CD8-positive, alpha-beta T cell (primary cell): ENCODE measurements at regions of chr12 and their contacts with region 1.

Region 1: GRCh38 chr12:56636675-56637540 is 6.8 kb upstream of the BAZ2A start:
- DNase-seq: peak; percentile 91 to 99 (median 97)
- ATAC-seq: peak; percentile 71
- H3K4me3 ChIP-seq: peak overlapping the region; percentile 58 to 79
- H3K4me3 Mint-ChIP-seq: peak overlapping the region; percentile 98
- H3K27ac ChIP-seq: peak overlapping the region; percentile 79 to 87
- H3K27ac Mint-ChIP-seq: peak overlapping the region; percentile 97
- H3K4me1 ChIP-seq: peaks cover 45% of the 10 kb centered on the region
- H3K4me1 Mint-ChIP-seq: peaks cover 57% of the 10 kb centered on the region
- H3K27me3 ChIP-seq: no peaks in the 10 kb centered on the region
- H3K27me3 Mint-ChIP-seq: no peaks in the 10 kb centered on the region
- CTCF ChIP-seq: peak; percentile 71

Region 2: GRCh38 chr12:55829967-55830600 is 806.8 kb before region 1 on chr12:
- CTCF ChIA-PET with region 1: no interaction called
- POLR2A ChIA-PET with region 1: no interaction called
- intact Hi-C with region 1: loop called in 1 of 2 experiments (anchors 10 kb)
- DNase-seq: peak in 7 of 9 experiments; percentile 15 to 63 (median 48)
- ATAC-seq: peak; percentile 16
- H3K4me3 ChIP-seq: peak overlapping the region; percentile 65 to 93
- H3K4me3 Mint-ChIP-seq: peak overlapping the region; percentile 99
- H3K27ac ChIP-seq: peak overlapping the region; percentile 71 to 79
- H3K27ac Mint-ChIP-seq: peak overlapping the region; percentile 95
- H3K4me1 ChIP-seq: peaks cover 45% of the 10 kb centered on the region
- H3K4me1 Mint-ChIP-seq: peaks cover 56% of the 10 kb centered on the region
- H3K27me3 ChIP-seq: no peaks in the 10 kb centered on the region
- H3K27me3 Mint-ChIP-seq: no peaks in the 10 kb centered on the region
- CTCF ChIP-seq: no peak

Region 3: GRCh38 chr12:56315622-56316473 is 321.1 kb before region 1 on chr12 and contains the start of gene CNPY2:
- CTCF ChIA-PET with region 1: no interaction called
- POLR2A ChIA-PET with region 1: no interaction called
- intact Hi-C with region 1: no loop called
- DNase-seq: peak; percentile 89 to 97 (median 95)
- ATAC-seq: peak; percentile 92
- H3K4me3 ChIP-seq: peak within 1 kb of the TSS; percentile 86 to 99
- H3K4me3 Mint-ChIP-seq: peak within 1 kb of the TSS; percentile 99
- H3K27ac ChIP-seq: peak within 1 kb of the TSS; percentile 70 to 98
- H3K27ac Mint-ChIP-seq: peak within 1 kb of the TSS; percentile 98
- H3K4me1 ChIP-seq: peaks cover 10% of the 10 kb centered on the region
- H3K4me1 Mint-ChIP-seq: peaks cover 16% of the 10 kb centered on the region
- H3K27me3 ChIP-seq: no peaks in the 10 kb centered on the region
- H3K27me3 Mint-ChIP-seq: no peaks in the 10 kb centered on the region
- CTCF ChIP-seq: no peak
- total RNA-seq, gene CNPY2: 23.5 to 33.9 TPM

Region 4: DNA sequence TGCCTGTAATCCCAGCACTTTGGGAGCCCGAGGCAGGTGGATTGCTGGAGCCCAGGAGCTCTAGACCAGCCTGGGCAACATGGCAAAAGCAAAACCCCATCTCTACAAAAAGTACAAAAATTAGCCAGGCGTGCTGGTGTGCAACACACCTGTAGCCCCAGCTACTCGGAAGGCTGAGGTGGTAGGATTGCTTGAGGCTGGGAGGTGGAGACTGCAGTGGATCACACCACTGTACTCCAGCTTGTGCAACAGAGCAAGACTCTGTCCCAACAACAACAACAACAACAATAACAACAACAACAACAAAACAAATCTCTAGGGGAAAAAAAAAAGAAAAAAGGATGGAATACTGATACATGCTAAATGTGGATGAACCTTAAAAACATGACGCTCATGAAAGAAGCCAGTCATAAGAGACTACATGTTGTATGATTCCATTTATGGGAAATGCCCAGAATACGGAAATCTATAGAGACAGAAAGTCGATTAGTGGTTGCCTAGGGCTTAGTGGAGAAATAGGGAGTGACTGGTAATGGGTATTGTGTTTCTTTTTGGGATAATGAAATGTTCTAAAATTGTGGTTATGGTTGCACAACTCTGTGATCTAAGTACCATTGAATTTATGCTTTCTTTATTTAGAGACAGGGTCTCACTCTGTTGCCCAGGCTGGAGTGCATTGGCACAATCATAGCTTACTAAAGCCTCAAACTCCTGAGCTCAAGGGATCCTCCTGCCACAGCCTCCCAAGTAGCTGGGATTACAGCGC is 107.4 kb before region 1 on chr12:
- CTCF ChIA-PET with region 1: no interaction called
- POLR2A ChIA-PET with region 1: no interaction called
- intact Hi-C with region 1: no loop called
- DNase-seq: no peak
- ATAC-seq: no peak
- H3K4me3 ChIP-seq: no peak overlapping the region
- H3K4me3 Mint-ChIP-seq: no peak overlapping the region
- H3K27ac ChIP-seq: no peak overlapping the region
- H3K27ac Mint-ChIP-seq: no peak overlapping the region
- H3K4me1 ChIP-seq: no peaks in the 10 kb centered on the region
- H3K4me1 Mint-ChIP-seq: no peaks in the 10 kb centered on the region
- H3K27me3 ChIP-seq: no peaks in the 10 kb centered on the region
- H3K27me3 Mint-ChIP-seq: no peaks in the 10 kb centered on the region
- CTCF ChIP-seq: no peak

Region 5: DNA sequence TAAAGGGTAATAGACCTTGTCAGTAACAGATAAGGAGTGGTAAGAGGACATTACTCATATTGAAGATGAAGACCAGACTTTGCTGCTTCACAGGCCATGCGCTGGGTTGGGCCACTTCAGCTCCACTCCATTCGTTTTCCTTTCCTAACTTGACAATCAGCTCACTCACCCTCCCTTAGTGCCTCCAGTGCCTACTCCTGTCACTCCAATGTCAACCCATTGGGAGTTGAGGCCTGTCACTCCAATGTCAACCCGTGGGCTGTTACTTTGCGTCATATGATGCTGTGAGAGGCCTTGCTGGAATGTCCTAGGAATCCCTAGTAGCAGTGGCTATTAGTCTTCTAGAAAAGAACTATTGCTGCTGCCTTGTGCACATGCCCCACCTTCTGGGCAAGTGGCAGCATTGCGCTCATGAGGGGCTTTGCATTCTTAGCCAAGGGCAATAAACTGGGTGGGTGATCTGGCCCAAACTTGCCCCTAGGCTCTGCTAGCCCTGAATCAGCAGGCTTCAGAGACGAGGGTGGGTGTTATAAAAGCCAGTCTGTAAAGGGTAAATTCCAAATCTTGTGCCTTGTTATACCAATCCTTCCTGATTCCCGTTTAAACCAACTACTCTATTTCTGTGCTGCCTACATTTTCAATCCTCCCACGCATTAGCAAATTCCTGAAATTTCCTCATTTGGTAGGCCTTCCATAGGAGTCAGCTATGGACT is 42.8 kb before region 1 on chr12:
- CTCF ChIA-PET with region 1: interaction called, 5 read pairs
- POLR2A ChIA-PET with region 1: no interaction called
- intact Hi-C with region 1: loop called in 1 of 2 experiments (anchors 2 kb)
- DNase-seq: peak; percentile 34 to 76 (median 65)
- ATAC-seq: peak; percentile 87
- H3K4me3 ChIP-seq: no peak overlapping the region
- H3K4me3 Mint-ChIP-seq: no peak overlapping the region
- H3K27ac ChIP-seq: no peak overlapping the region
- H3K27ac Mint-ChIP-seq: peak overlapping the region; percentile 77
- H3K4me1 ChIP-seq: no peaks in the 10 kb centered on the region
- H3K4me1 Mint-ChIP-seq: no peaks in the 10 kb centered on the region
- H3K27me3 ChIP-seq: no peaks in the 10 kb centered on the region
- H3K27me3 Mint-ChIP-seq: no peaks in the 10 kb centered on the region
- CTCF ChIP-seq: peak; percentile 91

Region 6: GRCh38 chr12:56622535-56622934 is 14.4 kb before region 1 on chr12:
- CTCF ChIA-PET with region 1: interaction called, 17 read pairs
- POLR2A ChIA-PET with region 1: interaction called, 23 read pairs
- intact Hi-C with region 1: loop called in 1 of 2 experiments (anchors 2 kb)
- DNase-seq: no peak
- ATAC-seq: no peak
- H3K4me3 ChIP-seq: no peak overlapping the region
- H3K4me3 Mint-ChIP-seq: no peak overlapping the region
- H3K27ac ChIP-seq: no peak overlapping the region
- H3K27ac Mint-ChIP-seq: peak overlapping the region; percentile 71
- H3K4me1 ChIP-seq: peaks cover 26% of the 10 kb centered on the region
- H3K4me1 Mint-ChIP-seq: peaks cover 68% of the 10 kb centered on the region
- H3K27me3 ChIP-seq: no peaks in the 10 kb centered on the region
- H3K27me3 Mint-ChIP-seq: no peaks in the 10 kb centered on the region
- CTCF ChIP-seq: no peak

Region 7: GRCh38 chr12:56751712-56752598 is 115.0 kb after region 1 on chr12 and contains the start of gene PRIM1:
- CTCF ChIA-PET with region 1: interaction called, 3 read pairs
- POLR2A ChIA-PET with region 1: interaction called, 4 read pairs
- intact Hi-C with region 1: loop called in 1 of 2 experiments (anchors 2 kb)
- DNase-seq: peak; percentile 58 to 89 (median 81)
- ATAC-seq: peak; percentile 81
- H3K4me3 ChIP-seq: peak within 1 kb of the TSS; percentile 91 to 99
- H3K4me3 Mint-ChIP-seq: peak within 1 kb of the TSS; percentile 97
- H3K27ac ChIP-seq: peak within 1 kb of the TSS; percentile 71 to 76
- H3K27ac Mint-ChIP-seq: peak within 1 kb of the TSS; percentile 86
- H3K4me1 ChIP-seq: peaks cover 11% of the 10 kb centered on the region
- H3K4me1 Mint-ChIP-seq: peaks cover 22% of the 10 kb centered on the region
- H3K27me3 ChIP-seq: no peaks in the 10 kb centered on the region
- H3K27me3 Mint-ChIP-seq: no peaks in the 10 kb centered on the region
- CTCF ChIP-seq: peak; percentile 23
- total RNA-seq, gene PRIM1: 5.0 to 5.8 TPM